ENCODE measurements at regions of chr4 and their contacts with region 1.

Region 1: GRCh38 chr4:141220655-141221605 is at the start of gene ZNF330:
- DNase-seq: peak; percentile 91
- H3K4me3 Mint-ChIP-seq: peak within 1 kb of the TSS; percentile 91
- H3K27ac Mint-ChIP-seq: peak within 1 kb of the TSS; percentile 90
- H3K4me1 Mint-ChIP-seq: peaks cover 33% of the 10 kb centered on the region
- H3K27me3 Mint-ChIP-seq: peaks cover 3% of the 10 kb centered on the region
- total RNA-seq, gene ZNF330: 60.3 to 62.6 TPM

Region 2: DNA sequence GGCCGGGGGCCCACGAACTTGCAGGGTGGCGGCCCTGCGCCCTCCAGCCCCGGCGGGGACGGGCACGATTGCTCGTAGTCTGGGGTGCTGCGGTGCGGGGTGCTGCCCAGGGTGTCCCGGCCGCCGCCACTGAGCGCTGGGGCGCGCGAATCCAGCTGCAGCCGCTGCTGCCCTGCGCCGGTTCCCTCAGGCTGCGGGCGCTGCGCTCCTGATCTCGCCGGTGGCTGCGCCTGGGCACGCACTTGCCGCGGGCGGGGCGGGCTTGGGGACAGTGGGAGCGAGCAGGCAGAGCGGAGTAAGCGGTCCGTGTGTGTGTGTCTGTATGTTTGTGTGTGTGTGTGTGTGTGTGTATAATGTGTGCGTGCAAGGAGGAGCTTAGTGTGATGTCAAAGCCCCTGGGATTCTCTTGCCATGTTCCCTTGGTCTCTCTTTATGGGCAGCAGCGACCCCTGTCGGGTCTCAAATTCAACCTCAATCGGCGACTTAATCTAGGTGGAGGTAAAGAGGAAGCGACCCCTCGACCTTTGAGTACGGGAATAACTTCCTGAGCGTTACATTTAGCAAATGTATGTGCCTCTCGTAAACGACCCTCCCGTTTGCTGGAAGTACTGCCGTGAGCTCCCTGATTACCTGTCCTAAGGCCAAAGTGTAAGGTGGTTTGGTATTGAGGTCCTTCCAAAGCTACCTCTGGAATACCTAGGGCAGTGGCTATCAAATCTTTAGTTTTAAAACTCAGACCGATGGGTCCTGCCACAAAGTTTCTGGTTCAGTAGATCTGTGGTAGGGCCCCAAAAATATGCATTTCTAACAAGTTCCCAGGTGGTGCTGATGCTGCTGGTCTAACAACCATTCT is 87.6 kb before region 1 on chr4 and contains the start of gene RNF150:
- CTCF ChIA-PET with region 1: no interaction called
- POLR2A ChIA-PET with region 1: no interaction called
- intact Hi-C with region 1: loop called (anchors 5 kb)
- DNase-seq: peak; percentile 68
- H3K4me3 Mint-ChIP-seq: peak within 1 kb of the TSS; percentile 72
- H3K27ac Mint-ChIP-seq: no peak within 1 kb of the TSS
- H3K4me1 Mint-ChIP-seq: peaks cover 11% of the 10 kb centered on the region
- H3K27me3 Mint-ChIP-seq: peaks cover 63% of the 10 kb centered on the region
- total RNA-seq, gene RNF150: not detected

Region 3: DNA sequence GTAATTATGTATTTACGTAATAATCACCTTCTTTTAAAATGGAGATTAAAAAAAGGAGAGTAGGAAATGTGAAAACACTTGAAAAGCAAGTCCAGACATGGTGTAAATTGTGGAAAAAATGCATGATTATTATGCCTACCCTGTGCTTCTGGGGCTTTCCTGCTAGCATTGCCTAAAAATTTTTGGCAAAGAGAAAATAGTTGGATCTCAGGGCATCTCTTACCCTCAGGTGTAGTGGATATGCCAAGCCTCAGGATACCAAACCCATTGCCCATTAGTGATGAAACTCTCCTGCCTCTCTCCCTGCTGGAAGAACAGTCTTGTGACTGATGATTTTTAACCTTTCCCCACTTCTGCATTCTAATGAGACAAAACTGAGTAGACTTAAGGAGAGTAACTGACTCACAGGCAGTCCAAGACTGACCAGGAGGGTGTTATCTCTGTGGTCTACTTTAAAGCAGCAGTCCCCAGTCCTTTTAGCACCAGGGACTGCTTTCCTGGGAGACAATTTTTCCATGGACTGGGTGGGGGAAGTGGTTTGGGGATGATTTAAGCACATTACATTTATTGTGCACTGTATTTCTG is 174.4 kb after region 1 on chr4:
- CTCF ChIA-PET with region 1: no interaction called
- POLR2A ChIA-PET with region 1: no interaction called
- intact Hi-C with region 1: no loop called
- DNase-seq: no peak
- H3K4me3 Mint-ChIP-seq: no peak overlapping the region
- H3K27ac Mint-ChIP-seq: no peak overlapping the region
- H3K4me1 Mint-ChIP-seq: no peaks in the 10 kb centered on the region
- H3K27me3 Mint-ChIP-seq: no peaks in the 10 kb centered on the region

Region 4: GRCh38 chr4:141636082-141636770 is 415.3 kb after region 1 on chr4 and contains the start of gene IL15:
- CTCF ChIA-PET with region 1: no interaction called
- POLR2A ChIA-PET with region 1: no interaction called
- intact Hi-C with region 1: loop called (anchors 5 kb)
- DNase-seq: peak; percentile 86
- H3K4me3 Mint-ChIP-seq: peak within 1 kb of the TSS; percentile 88
- H3K27ac Mint-ChIP-seq: peak within 1 kb of the TSS; percentile 64
- H3K4me1 Mint-ChIP-seq: peaks cover 27% of the 10 kb centered on the region
- H3K27me3 Mint-ChIP-seq: peaks cover 2% of the 10 kb centered on the region
- total RNA-seq, gene IL15: 1.4 to 2.2 TPM

Region 5: DNA sequence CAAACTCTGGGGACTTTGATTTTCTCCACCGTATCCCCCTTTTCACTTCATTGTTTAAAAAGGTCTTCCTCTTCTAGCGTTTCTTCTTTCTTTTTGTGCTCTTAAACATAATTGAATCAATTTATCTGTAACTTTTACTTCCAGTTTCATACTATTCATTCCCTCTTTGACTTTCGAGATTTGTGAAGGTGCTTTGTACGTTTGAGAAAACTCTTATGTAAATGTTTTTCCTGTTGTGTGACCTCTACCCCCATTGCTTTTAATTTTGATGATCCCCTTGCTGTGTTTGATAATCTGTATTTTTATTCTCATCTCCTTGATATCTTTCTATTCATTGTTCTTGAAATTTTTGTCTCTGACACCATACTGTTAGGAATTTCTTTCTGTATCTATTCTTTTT is 1968.6 kb after region 1 on chr4:
- CTCF ChIA-PET with region 1: no interaction called
- POLR2A ChIA-PET with region 1: no interaction called
- intact Hi-C with region 1: loop called (anchors 2 kb)
- DNase-seq: no peak
- H3K4me3 Mint-ChIP-seq: peak overlapping the region; percentile 87
- H3K27ac Mint-ChIP-seq: peak overlapping the region; percentile 18
- H3K4me1 Mint-ChIP-seq: peaks cover 44% of the 10 kb centered on the region
- H3K27me3 Mint-ChIP-seq: no peaks in the 10 kb centered on the region